ENCODE measurements at regions of chr10 and their contacts with region 1.

Region 1: GRCh38 chr10:132463333-132464252 is 66.6 kb downstream of the PWWP2B start:
- DNase-seq: peak; percentile 57
- ATAC-seq: peak; percentile 33

Region 2: DNA sequence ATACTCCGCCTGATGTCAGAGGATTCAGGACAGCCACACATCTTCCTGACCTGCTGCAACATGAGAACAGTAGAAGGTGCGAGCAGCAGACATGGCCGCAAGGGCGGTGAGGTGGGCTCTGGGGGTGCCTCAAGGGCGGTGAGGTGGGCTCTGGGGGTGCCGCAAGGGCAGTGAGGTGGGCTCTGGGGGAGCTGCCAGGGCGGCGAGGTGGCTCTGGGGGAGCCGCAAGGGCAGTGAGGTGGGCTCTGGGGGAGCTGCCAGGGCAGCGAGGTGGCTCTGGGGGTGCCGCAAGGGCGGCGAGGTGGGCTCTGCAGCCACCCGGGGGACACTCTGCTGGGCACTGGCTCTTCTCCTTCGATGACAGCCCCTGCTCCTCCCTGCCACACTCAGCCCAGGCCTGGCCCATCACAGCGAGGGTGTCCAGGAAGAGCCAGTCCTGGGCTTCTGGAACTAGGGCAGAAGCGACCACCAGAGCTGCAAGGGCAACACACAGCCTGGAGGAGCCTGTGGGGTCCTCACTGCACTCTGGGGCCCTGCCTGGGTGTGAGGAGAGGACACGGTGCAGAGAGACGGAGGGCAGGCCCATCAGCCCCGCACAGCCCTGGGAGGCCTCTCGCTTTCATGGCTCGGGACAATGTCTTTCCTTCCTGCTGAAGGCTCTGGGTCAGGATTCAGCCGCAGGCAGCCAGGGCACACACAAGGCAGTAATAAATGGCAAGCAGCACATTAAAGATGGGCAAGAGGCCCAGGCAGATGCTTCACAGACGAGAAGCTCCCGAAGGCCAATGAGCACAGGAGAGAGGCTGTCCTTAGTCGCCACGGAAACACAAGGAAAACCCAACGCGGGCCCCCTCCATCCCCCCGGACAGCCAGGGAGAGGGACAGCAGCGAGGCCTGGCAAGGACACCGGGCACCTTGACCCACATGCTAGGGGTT is 198.4 kb before region 1 on chr10:
- intact Hi-C with region 1: no loop called
- DNase-seq: peak; percentile 18
- ATAC-seq: no peak

Region 3: GRCh38 chr10:132516771-132517725 is 53.5 kb after region 1 on chr10:
- intact Hi-C with region 1: loop called (anchors 10 kb)
- DNase-seq: peak; percentile 95
- ATAC-seq: peak; percentile 83

Region 4: DNA sequence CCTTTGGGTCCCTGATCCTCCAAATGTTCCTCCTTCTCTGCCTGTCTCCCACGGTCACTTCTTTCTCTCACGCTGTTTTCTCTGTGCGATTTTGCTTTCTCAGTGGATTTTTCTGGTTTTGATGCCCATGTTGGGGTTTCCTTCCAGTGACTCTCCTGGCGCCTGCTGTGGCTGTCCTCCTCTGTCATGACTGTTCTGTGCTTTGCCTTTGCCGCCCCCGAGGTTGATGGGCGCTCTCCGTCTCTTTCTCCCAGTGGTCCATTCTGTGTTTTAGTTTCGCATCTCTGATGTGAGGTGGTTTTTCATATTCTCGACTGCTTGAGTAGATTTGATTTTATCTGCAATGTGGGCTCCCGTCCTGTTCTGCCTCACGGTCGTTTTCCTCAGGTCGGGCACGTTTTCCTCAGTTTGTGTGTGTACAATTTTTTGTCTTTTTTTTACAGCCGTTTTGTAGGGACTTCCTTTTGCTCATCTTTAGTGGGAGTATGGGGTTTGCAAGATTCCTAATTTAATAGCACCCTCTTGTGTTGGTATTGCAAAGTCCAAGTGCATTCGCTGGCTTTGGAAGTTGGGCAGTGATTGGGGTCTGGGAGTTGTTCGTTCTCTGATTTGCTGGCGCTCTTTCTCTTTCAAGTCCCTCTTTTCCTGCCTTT is 174.0 kb after region 1 on chr10:
- intact Hi-C with region 1: loop called (anchors 5 kb)
- DNase-seq: no peak
- ATAC-seq: peak; percentile 71

Region 5: DNA sequence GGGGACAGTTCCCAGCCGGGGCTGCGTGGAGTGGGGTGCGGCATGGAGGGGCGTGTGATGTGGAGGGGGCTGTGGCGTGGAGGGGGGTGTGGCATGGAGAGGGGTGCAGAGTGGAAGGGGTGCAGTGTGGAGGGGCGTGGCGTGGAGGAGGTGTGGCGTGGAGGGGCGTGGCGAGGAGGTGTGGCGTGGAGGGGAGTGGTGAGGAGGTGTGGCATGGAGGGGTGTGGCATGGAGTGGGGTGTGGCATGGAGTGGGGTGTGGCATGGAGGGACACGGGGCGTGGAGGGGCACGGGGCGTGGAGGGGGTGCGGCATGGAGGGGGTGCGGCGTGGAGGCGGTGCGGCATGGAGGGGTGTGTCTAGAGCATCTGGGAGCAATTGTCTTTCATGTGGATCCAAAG is 288.8 kb after region 1 on chr10:
- intact Hi-C with region 1: no loop called
- DNase-seq: no peak
- ATAC-seq: peak; percentile 11